ENCODE measurements at regions of chr6 and their contacts with region 1.

Region 1: DNA sequence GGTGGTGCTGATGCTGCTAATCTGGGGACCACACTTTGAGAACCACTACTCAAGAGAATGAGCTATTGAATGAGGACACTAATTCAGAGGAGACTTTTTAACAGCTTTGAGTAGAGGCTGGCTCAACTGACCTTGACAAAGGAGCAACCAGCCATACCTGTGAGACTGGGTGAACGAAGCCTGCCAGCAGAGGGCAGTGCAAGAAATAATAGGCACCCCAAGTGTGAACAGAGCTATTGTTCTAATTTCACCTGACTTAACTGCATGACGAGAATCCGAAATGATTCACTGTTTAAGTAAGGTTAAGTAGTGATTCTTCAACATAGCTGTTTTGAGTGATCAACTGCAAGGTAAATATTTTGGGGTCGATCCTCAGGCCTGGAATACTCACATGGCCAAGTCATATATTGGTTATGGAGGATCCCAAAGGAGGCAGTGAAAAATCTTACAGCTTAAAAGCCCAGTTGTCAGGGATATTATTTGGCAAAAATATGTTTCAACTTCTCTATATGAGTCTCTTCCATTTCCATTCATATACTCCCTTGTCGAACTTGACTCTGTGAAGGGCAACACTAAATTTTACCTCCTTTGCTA is 550.5 kb upstream of the MARCKS start:
- DNase-seq: peak; percentile 34 to 81
- H3K4me3 ChIP-seq: no peak overlapping the region
- H3K27ac ChIP-seq: no peak overlapping the region
- H3K4me1 ChIP-seq: no peaks in the 10 kb centered on the region
- H3K27me3 ChIP-seq: no peaks in the 10 kb centered on the region
- CTCF ChIP-seq: peak; percentile 68 to 85 (median 75)
- EP300 ChIP-seq: no peak
- POLR2A ChIP-seq: no peak
- RAD21 ChIP-seq: peak; percentile 75 to 78

Region 2: GRCh38 chr6:113292646-113293422 is 13.8 kb before region 1 on chr6:
- CTCF ChIA-PET with region 1: interaction called, 14 read pairs
- POLR2A ChIA-PET with region 1: no interaction called
- DNase-seq: no peak
- H3K4me3 ChIP-seq: no peak overlapping the region
- H3K27ac ChIP-seq: no peak overlapping the region
- H3K4me1 ChIP-seq: peaks cover 0 to 2% (median 0%) of the 10 kb centered on the region in 4 experiments; a peak in 2 of 7 replicates
- H3K27me3 ChIP-seq: no peaks in the 10 kb centered on the region
- CTCF ChIP-seq: no peak
- EP300 ChIP-seq: no peak
- POLR2A ChIP-seq: no peak
- RAD21 ChIP-seq: no peak

Region 3: DNA sequence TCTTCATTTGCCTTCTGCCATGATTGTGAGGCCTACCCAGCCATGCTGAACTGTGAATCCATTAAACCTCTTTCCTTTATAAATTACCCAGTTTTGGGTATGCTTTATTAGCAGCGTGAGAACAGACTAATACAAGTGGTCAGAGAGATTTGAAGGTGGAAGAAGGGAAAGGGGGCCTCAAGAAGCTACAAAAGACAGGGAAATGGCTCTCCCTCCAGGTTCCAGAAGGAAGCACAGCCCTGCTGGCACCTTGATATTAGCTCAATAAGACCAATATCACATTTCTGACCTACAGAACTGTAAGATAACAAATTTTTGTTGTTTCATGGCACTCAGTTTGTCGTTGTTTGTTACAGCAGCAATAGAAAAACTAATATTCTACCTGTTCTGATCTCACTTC is 14.0 kb after region 1 on chr6:
- CTCF ChIA-PET with region 1: interaction called, 12 read pairs
- POLR2A ChIA-PET with region 1: no interaction called
- DNase-seq: no peak
- H3K4me3 ChIP-seq: no peak overlapping the region
- H3K27ac ChIP-seq: no peak overlapping the region
- H3K4me1 ChIP-seq: no peaks in the 10 kb centered on the region
- H3K27me3 ChIP-seq: no peaks in the 10 kb centered on the region
- CTCF ChIP-seq: peak in 2 of 3 experiments; percentile 13 to 39; a peak in 2 of 4 replicates
- EP300 ChIP-seq: no peak
- POLR2A ChIP-seq: no peak
- RAD21 ChIP-seq: peak; percentile 57 to 61

Region 4: DNA sequence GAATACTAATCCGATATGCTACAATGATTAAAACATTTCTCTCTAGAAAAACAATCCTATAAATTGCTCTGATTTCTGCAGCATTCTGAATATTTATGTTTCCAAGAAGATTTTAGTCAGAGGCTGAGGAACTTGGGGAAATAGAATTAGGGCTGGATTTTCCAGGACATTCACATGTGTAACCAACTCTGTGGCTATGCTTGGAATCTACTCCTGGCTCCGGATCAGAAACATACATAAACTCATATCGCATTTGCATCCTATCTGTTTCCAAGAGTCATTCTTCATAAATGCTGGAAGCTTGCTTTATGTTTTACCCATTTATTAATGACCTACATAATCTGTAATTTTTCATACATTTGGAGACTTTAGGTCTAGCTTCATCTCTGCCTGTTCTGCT is 90.6 kb after region 1 on chr6:
- CTCF ChIA-PET with region 1: no interaction called
- POLR2A ChIA-PET with region 1: no interaction called
- DNase-seq: no peak
- H3K4me3 ChIP-seq: no peak overlapping the region
- H3K27ac ChIP-seq: no peak overlapping the region
- H3K4me1 ChIP-seq: no peaks in the 10 kb centered on the region
- H3K27me3 ChIP-seq: no peaks in the 10 kb centered on the region
- CTCF ChIP-seq: no peak
- EP300 ChIP-seq: no peak
- POLR2A ChIP-seq: no peak
- RAD21 ChIP-seq: no peak

Region 5: DNA sequence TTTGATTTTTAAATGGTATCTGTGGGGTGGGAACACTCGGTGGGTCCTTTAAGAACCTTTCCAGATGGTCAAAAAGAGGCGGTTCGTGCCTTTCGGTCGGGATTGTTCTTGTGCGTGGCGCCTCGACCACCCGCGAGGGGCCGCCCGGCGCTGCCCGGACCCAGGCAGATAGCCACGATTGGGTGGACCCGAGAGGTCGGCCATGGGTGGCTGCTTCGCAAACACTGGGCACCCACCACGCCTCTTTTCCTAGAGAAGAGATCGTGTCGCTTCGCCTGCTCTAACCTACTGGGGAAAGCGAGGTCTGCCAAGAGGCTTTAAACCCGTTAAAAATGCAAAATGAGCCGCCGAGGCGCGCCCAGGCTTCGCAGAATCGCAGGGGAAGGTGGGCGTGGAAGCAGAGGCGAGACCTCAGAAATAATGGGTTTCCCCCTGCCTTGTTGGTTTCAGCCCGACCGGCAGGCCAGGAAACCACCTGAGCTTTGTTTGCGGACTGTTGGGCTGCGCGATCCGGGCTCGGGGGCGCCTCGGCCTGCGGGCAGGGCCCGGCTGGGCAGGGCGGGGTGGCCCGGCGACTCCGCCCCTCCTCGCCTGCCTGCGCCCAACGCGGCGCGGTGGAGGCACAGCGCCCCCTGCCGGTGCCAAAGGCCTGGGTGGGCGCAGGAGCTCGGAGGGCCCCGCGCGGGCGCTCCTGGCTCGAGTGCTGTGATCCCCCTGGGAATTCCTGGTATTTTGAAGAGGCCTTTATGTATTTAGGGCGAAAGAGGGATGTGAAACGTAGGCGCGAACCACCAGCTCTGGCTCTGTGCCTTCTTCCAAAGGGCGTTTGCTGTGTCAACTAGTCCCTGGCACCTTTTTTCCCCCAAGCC is 552.1 kb after region 1 on chr6:
- CTCF ChIA-PET with region 1: interaction called, 12 read pairs
- POLR2A ChIA-PET with region 1: no interaction called
- DNase-seq: peak; percentile 89 to 96
- H3K4me3 ChIP-seq: peak overlapping the region; percentile 95 to 99 (median 98)
- H3K27ac ChIP-seq: peak overlapping the region; percentile 90
- H3K4me1 ChIP-seq: peaks cover 4 to 7% (median 6%) of the 10 kb centered on the region in 4 experiments; a peak in 4 of 7 replicates
- H3K27me3 ChIP-seq: peaks cover 6 to 21% (median 15%) of the 10 kb centered on the region in 4 experiments; a peak in 6 of 7 replicates
- CTCF ChIP-seq: peak; percentile 79 to 91 (median 82)
- EP300 ChIP-seq: peak in 1 of 2 experiments; percentile 69; a peak in 2 of 3 replicates
- POLR2A ChIP-seq: peak; percentile 88 to 91
- RAD21 ChIP-seq: peak; percentile 84 to 96

Region 6: DNA sequence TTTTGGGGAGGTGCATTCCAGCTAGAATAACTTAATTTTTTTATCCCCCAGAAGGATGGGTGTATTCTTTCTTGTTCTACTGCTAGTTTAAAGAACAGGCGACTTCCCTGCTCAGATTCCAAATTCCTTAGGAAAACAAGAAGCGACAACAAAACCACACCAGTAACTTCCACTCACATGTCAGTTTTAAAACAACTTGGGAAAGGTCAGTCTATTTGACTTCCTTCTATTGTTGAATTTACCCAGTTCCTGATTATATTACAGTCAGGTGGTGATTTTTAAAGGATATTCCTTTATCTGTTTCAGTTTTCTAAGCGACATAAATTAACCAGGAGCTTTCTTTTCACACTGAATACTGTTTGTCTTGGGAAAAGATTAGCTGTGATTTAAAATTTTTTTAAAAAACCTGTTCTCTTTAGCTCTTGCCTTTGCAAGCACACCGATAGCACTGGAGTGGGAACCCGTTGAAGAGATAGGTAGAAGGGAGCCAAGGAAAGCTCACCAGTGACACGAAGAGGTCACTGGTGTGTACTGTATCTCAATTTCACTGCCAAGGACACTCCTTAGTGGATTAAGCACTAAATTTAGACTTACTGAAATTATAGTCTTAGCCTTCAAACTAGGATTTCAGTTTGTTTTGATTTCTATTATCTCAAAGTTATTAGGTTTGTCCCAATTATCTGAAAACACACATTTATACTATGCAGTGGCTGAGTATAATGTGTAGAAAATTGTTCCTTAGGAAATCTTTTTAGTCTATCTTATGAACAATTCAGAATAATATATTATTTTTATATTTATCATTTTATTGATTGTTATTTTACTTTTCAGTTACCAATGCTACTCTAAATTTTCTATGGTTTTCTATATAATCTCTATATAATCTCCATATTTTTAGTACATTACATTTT is 572.8 kb after region 1 on chr6:
- CTCF ChIA-PET with region 1: interaction called, 21 read pairs
- POLR2A ChIA-PET with region 1: no interaction called
- DNase-seq: no peak
- H3K4me3 ChIP-seq: no peak overlapping the region
- H3K27ac ChIP-seq: no peak overlapping the region
- H3K4me1 ChIP-seq: no peaks in the 10 kb centered on the region
- H3K27me3 ChIP-seq: no peaks in the 10 kb centered on the region
- CTCF ChIP-seq: peak; percentile 17 to 81 (median 74)
- EP300 ChIP-seq: no peak
- POLR2A ChIP-seq: no peak
- RAD21 ChIP-seq: peak; percentile 96 to 97